Activated CD4-positive, alpha-beta memory T cell treated with anti-CD3 and anti-CD28 coated beads for 36 hours (primary cell): ENCODE measurements at regions of chr2 and their contacts with region 1.

Region 1: DNA sequence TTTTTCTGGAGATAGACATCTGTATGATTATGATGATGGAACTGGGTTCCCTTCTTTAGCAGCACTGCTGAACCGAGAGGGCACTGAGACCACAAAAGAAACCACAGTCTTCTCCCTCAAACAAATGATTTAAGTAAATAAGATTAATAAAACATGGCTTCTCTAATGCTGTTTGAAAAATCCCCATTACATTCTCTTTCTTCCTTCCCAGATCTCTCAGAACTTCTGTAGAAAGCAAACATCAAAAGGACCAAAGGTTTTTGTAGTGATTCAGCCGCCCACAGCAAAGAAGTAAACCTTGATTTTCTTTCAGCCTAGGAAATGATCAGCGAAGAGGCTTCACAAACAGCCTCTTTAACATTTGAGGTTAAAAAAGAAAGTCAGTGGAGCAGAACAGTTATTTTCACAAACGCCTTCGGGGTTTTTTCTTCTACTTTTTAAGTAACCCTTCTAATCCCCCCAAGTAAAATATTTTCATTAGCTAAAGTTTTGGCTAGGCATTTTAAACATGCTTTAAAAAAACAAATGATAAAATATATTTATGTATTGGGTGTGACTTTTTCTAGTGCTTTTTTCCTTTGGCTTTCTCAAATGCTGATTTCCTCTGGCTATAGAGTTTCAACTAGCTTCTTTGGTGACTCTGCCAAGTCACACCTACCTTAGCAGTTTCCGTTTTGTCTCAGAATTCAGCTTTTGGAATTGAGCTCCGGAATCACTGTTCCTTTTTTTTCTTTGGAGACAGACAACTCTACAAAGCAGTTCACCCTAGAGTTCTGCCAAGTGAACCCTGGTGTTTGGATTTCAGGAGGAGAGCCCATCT is 89.6 kb downstream of the UPP2 start:
- DNase-seq: peak; percentile 25
- H3K4me3 Mint-ChIP-seq: peak overlapping the region; percentile 9
- H3K27ac Mint-ChIP-seq: peak overlapping the region; percentile 10
- H3K4me1 Mint-ChIP-seq: peaks cover 18% of the 10 kb centered on the region
- H3K27me3 Mint-ChIP-seq: peaks cover 14% of the 10 kb centered on the region

Region 2: DNA sequence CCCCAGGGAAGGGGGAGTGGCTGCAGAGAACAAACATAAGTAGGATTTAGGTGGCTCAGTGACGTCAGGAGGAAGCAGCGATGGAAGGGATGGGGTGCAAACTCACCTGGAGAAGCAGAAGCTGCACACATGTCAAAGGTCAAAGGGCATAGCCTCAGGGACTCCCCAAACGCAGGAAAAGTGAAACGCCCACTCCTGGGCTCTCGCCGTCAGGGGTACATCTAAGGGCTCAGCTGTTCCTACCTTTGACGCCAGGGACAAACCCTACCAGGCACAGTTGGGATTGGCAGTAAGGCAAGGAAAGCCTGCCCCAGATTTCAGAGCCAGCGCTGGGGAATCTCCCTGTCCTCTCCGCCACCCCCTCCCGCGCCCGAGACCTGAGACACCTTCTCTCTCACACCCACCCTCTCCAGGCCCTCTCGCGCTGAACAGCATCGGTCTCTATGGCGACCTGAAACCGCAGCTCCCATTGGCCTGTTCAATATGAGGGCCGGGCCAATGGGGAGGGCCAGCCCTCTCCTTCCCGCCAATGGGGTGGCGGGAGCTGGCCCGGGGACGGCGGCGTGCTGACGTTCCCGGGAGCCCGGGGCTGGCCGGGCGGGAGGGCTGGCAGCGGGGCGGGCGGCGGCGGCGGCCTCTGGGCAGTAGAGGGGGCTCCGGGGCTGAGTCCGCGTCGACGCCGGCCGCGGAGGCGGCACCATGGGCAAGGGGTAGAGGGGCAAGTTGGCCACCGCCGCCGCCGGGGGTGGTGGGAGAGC is 265.2 kb after region 1 on chr2 and contains the starts of genes CCDC148 and PKP4:
- CTCF ChIA-PET with region 1: no interaction called
- POLR2A ChIA-PET with region 1: no interaction called
- intact Hi-C with region 1: loop called (anchors 1 kb)
- DNase-seq: peak; percentile 94
- H3K4me3 Mint-ChIP-seq: peak within 1 kb of the TSS; percentile 93
- H3K27ac Mint-ChIP-seq: peak within 1 kb of the TSS; percentile 72
- H3K4me1 Mint-ChIP-seq: peaks cover 28% of the 10 kb centered on the region
- H3K27me3 Mint-ChIP-seq: no peaks in the 10 kb centered on the region
- total RNA-seq, gene CCDC148: 0.29 TPM in 1 of 2 experiments, not detected in the other
- total RNA-seq, gene PKP4: 41.4 to 43.1 TPM